ENCODE measurements at regions of chr12 and their contacts with region 1.

Region 1: DNA sequence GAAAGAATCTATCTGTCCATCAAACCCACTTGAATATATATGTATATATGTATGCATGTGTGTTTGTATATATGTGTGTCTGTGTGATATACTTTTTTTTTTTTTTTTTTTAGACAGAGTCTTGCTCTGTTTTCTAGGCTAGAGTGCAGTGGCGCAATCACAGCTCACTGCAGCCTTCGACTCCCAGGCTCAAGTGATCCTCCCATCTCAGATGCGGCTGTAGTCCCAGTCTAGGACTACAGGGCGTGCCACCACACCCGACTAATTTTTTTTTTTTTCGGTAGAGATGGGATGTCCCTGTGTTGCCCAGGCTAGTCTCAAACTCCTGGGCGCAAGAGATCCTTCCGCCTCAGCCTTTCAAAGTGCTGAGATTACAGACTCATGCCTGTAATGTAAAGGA is 13.0 kb upstream of the APOBEC1 start:
- DNase-seq: no peak
- ATAC-seq: no peak
- H3K4me3 ChIP-seq: no peak overlapping the region
- H3K27ac ChIP-seq: no peak overlapping the region
- H3K4me1 ChIP-seq: no peaks in the 10 kb centered on the region
- H3K27me3 ChIP-seq: peaks cover 12% of the 10 kb centered on the region; the same call in 1 of the 2 replicates
- CTCF ChIP-seq: no peak

Region 2: GRCh38 chr12:7806863-7807487 is 128.2 kb after region 1 on chr12:
- CTCF ChIA-PET with region 1: interaction called, 4 read pairs
- POLR2A ChIA-PET with region 1: no interaction called
- intact Hi-C with region 1: loop called (anchors 1 kb)
- DNase-seq: peak; percentile 69
- ATAC-seq: peak; percentile 80
- H3K4me3 ChIP-seq: no peak overlapping the region
- H3K27ac ChIP-seq: no peak overlapping the region
- H3K4me1 ChIP-seq: no peaks in the 10 kb centered on the region
- H3K27me3 ChIP-seq: peaks cover 5% of the 10 kb centered on the region
- CTCF ChIP-seq: peak; percentile 85